Activated CD4-positive, alpha-beta T cell treated with anti-CD3 and anti-CD28 coated beads, Interleukin-2, amount 10 ng/mL, durations not matched to agents 24 days and 14 days (primary cell): ENCODE measurements at regions of chr15 and their contacts with region 1.

Region 1: GRCh38 chr15:60720493-60721256 is 241.7 kb upstream of the ICE2 start:
- DNase-seq: peak; percentile 85
- H3K4me3 Mint-ChIP-seq: peak overlapping the region; percentile 63
- H3K27ac Mint-ChIP-seq: peak overlapping the region; percentile 92
- H3K4me1 Mint-ChIP-seq: peaks cover 52% of the 10 kb centered on the region
- H3K27me3 Mint-ChIP-seq: no peaks in the 10 kb centered on the region

Region 2: GRCh38 chr15:60580650-60581376 is 139.9 kb before region 1 on chr15:
- intact Hi-C with region 1: loop called (anchors 2 kb)
- DNase-seq: peak; percentile 88
- H3K4me3 Mint-ChIP-seq: peak overlapping the region; percentile 73
- H3K27ac Mint-ChIP-seq: peak overlapping the region; percentile 94
- H3K4me1 Mint-ChIP-seq: peaks cover 71% of the 10 kb centered on the region
- H3K27me3 Mint-ChIP-seq: no peaks in the 10 kb centered on the region

Region 3: GRCh38 chr15:60695713-60696522 is 24.8 kb before region 1 on chr15:
- intact Hi-C with region 1: loop called (anchors 1 kb)
- DNase-seq: peak; percentile 81
- H3K4me3 Mint-ChIP-seq: peak overlapping the region; percentile 66
- H3K27ac Mint-ChIP-seq: peak overlapping the region; percentile 79
- H3K4me1 Mint-ChIP-seq: peaks cover 42% of the 10 kb centered on the region
- H3K27me3 Mint-ChIP-seq: no peaks in the 10 kb centered on the region

Region 4: DNA sequence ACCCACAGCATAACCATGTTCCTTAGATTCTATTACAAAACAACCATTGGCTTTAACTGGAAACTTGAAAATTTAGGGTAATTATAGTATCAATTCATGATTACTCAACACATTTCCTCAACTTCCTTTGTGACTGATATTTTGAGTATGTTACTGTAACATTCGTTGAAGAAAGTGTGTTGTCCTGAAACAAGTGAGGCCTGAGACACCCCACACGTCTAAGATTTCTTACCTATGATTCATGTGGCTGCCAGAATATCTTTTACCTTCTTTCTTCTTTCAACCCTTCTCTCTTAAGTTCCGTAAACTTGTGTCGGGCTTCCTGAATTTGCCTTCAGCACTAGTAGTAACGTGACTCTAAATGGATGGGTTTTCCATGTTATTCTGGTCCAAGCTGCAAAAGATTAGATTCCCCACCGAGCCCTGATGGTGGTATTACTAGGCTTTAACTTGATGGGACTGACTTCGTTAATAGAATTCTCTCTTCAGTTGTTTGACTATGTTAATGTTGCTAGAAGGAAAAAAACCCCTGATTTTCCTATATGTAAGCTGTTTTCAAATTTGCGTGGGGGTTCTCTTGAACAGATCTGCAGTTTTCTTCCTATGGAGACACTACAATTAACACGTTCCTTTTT is 54.3 kb after region 1 on chr15:
- intact Hi-C with region 1: loop called (anchors 2 kb)
- DNase-seq: no peak
- H3K4me3 Mint-ChIP-seq: no peak overlapping the region
- H3K27ac Mint-ChIP-seq: peak overlapping the region; percentile 48
- H3K4me1 Mint-ChIP-seq: peaks cover 28% of the 10 kb centered on the region
- H3K27me3 Mint-ChIP-seq: no peaks in the 10 kb centered on the region

Region 5: DNA sequence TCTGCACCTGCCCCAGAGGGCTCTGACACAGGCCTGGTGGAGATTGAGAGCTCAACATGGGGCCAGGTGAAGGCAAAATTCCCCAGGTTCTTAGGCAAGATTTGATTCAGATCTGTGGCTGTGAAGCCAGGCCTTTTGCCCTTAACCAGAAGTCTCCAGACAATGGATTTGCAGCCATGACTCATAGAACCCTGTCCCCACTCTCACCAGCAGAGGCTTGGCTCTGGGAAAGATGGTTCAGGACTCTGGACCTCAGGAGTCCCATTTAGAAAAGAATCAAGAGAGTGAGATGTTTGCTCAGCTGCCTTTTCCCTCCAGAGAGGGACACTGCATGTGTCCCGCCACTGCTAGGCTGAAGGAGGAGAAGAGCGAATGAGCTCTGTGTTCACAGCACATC is 119.6 kb after region 1 on chr15:
- intact Hi-C with region 1: loop called (anchors 1 kb)
- DNase-seq: no peak
- H3K4me3 Mint-ChIP-seq: peak overlapping the region; percentile 63
- H3K27ac Mint-ChIP-seq: peak overlapping the region; percentile 35
- H3K4me1 Mint-ChIP-seq: peaks cover 67% of the 10 kb centered on the region
- H3K27me3 Mint-ChIP-seq: peaks cover 16% of the 10 kb centered on the region

Region 6: GRCh38 chr15:60916679-60917460 is 196.2 kb after region 1 on chr15:
- intact Hi-C with region 1: loop called (anchors 1 kb)
- DNase-seq: peak; percentile 95
- H3K4me3 Mint-ChIP-seq: no peak overlapping the region
- H3K27ac Mint-ChIP-seq: peak overlapping the region; percentile 75
- H3K4me1 Mint-ChIP-seq: peaks cover 27% of the 10 kb centered on the region
- H3K27me3 Mint-ChIP-seq: no peaks in the 10 kb centered on the region